BJ (cell line): ENCODE measurements at regions of chr3 and their contacts with region 1.

Region 1: GRCh38 chr3:193572426-193572908 is 17.8 kb upstream of the ATP13A4 start:
- DNase-seq: no peak
- H3K4me3 ChIP-seq: no peak overlapping the region
- H3K27me3 ChIP-seq: 0 out of 2 replicates have a peak, but pooled peaks cover 2% of the 10 kb centered on the region
- CTCF ChIP-seq: peak; percentile 81

Region 2: GRCh38 chr3:192566706-192567290 is 1005.7 kb before region 1 on chr3:
- CTCF ChIA-PET with region 1: interaction called, 27 read pairs
- POLR2A ChIA-PET with region 1: no interaction called
- DNase-seq: peak; percentile 17
- H3K4me3 ChIP-seq: no peak overlapping the region
- H3K27me3 ChIP-seq: no peaks in the 10 kb centered on the region
- CTCF ChIP-seq: peak; percentile 70

Region 3: DNA sequence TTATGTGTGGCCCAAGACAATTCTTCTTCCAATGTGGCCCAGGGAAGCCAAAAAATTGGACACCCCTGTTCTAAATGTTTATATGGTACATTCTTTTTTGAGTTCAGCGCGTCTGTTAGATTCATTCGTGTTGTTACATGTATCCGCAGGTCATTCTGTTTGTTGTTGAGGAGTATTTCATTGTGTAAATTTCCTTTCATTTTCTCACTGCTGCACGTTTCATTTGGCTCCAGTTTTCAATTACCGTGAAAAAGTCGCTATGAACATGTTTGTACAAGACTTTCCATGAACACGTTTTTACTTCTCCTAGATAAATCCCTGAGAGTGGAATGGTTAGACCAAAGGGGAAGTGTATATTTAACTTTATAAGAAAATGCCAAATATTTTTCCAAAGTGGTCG is 13.1 kb after region 1 on chr3:
- CTCF ChIA-PET with region 1: interaction called, 19 read pairs
- POLR2A ChIA-PET with region 1: no interaction called
- DNase-seq: no peak
- H3K4me3 ChIP-seq: no peak overlapping the region
- H3K27me3 ChIP-seq: no peaks in the 10 kb centered on the region
- CTCF ChIP-seq: no peak